Activated naive CD4-positive, alpha-beta T cell treated with anti-CD3 and anti-CD28 coated beads, Interleukin-2, amount 10 ng/mL, durations not matched to agents 7 days and 5 days (primary cell): ENCODE measurements at regions of chrX and their contacts with region 1.

Region 1: GRCh38 chrX:38982843-38983242 is 181.6 kb downstream of the MID1IP1 start:
- DNase-seq: no peak
- H3K4me3 Mint-ChIP-seq: no peak overlapping the region
- H3K27ac Mint-ChIP-seq: peak overlapping the region; percentile 60
- H3K4me1 Mint-ChIP-seq: no peaks in the 10 kb centered on the region
- H3K27me3 Mint-ChIP-seq: peaks cover 4% of the 10 kb centered on the region

Region 2: GRCh38 chrX:38799995-38800580 is 182.8 kb before region 1 on chrX:
- CTCF ChIA-PET with region 1: interaction called, 10 read pairs
- DNase-seq: peak; percentile 27
- H3K4me3 Mint-ChIP-seq: peak overlapping the region; percentile 40
- H3K27ac Mint-ChIP-seq: no peak overlapping the region
- H3K4me1 Mint-ChIP-seq: peaks cover 13% of the 10 kb centered on the region
- H3K27me3 Mint-ChIP-seq: no peaks in the 10 kb centered on the region

Region 3: GRCh38 chrX:38896724-38897298 is 86.0 kb before region 1 on chrX:
- CTCF ChIA-PET with region 1: no interaction called
- DNase-seq: no peak
- H3K4me3 Mint-ChIP-seq: no peak overlapping the region
- H3K27ac Mint-ChIP-seq: no peak overlapping the region
- H3K4me1 Mint-ChIP-seq: peaks cover 11% of the 10 kb centered on the region
- H3K27me3 Mint-ChIP-seq: no peaks in the 10 kb centered on the region